ENCODE measurements at regions of chr7 and their contacts with region 1.

Region 1: DNA sequence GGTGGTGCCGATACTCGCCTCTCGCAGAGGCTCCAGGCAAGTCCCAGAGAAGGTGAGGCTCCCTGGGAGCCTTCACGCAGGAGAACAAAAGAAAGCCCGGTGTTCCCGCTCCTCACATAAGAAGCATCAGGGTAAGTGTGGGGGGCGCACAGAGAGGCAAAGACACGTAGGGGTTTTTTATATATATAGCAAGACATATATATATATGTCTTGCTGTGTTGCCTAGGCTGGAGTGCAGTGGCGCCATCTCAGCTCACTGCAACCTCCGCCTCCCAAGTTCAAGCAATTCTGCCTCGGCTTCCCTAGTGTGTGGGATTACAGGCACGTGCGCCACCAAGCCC is 61.3 kb downstream of the PDIA4 start:
- DNase-seq: no peak
- H3K4me3 ChIP-seq: peak overlapping the region; percentile 42 to 44
- H3K27ac ChIP-seq: peak overlapping the region in 1 of 2 donors; percentile 21
- H3K4me1 ChIP-seq: peaks cover 6% of the 10 kb centered on the region
- H3K27me3 ChIP-seq: no peaks in the 10 kb centered on the region
- CTCF ChIP-seq: no peak
- POLR2A ChIP-seq: no peak

Region 2: DNA sequence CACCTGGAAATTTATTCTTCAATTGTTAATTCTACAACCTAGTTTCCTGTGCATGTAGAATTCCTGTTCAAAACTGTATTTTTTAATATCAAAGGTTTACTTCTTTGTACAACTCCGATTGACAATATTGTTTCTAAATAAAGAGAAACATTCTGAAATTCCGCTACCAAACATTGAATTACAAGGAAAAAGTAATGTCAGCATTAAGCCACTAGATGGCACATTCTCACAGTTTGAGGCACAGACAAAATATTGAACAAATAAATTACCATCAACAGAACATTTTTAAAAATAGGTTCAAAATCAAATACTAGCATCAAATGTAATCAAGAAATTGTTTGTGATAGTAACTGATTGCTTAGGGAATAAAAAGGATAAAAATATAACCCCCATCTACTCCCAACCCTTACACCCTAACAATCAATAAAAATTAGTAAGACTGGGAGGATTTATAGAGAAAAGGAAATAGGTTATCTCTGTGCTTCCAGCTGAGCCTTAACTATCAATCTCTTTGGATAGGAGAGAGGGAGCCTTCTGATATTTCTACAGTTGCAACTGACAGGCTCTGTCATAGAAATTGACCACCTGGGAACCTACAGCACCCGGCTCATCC is 463.0 kb before region 1 on chr7:
- intact Hi-C with region 1: loop called (anchors 5 kb)
- DNase-seq: no peak
- H3K4me3 ChIP-seq: no peak overlapping the region
- H3K27ac ChIP-seq: no peak overlapping the region
- H3K4me1 ChIP-seq: no peaks in the 10 kb centered on the region
- H3K27me3 ChIP-seq: no peaks in the 10 kb centered on the region
- CTCF ChIP-seq: peak; percentile 59 to 75 (median 65)
- POLR2A ChIP-seq: no peak